ENCODE measurements at regions of chr14 and their contacts with region 1.

Region 1: GRCh38 chr14:54773171-54773975 is 129.3 kb downstream of the GCH1 start:
- DNase-seq: peak; percentile 78
- H3K4me3 ChIP-seq: peak overlapping the region; percentile 22
- H3K27ac ChIP-seq: peak overlapping the region; percentile 91
- H3K4me1 ChIP-seq: peaks cover 95% of the 10 kb centered on the region
- H3K27me3 ChIP-seq: no peaks in the 10 kb centered on the region
- CTCF ChIP-seq: peak; percentile 73

Region 2: GRCh38 chr14:54565785-54566409 is 207.5 kb before region 1 on chr14:
- intact Hi-C with region 1: loop called (anchors 2 kb)
- DNase-seq: peak; percentile 96
- H3K4me3 ChIP-seq: peak overlapping the region; percentile 89
- H3K27ac ChIP-seq: peak overlapping the region; percentile 99
- H3K4me1 ChIP-seq: peaks cover 63% of the 10 kb centered on the region
- H3K27me3 ChIP-seq: no peaks in the 10 kb centered on the region
- CTCF ChIP-seq: no peak

Region 3: DNA sequence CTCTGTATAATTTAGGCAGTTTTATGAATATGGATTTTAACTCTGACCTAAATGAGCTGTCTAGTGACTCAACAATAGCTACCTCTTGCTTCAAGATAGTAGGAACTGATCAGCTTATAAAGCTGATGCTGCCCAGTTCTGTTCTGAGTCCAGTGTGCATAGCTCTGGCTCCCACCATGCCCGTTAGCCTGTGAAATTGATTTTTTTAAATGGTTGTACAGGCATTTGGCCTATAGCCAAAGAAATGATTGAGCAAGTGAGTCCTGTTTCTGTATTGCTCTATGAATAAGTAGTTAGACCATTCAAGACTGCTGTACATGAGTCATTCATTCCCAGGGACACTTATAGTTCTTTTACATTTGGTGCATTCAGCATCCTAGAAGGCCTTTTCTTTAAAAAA is 170.0 kb before region 1 on chr14:
- intact Hi-C with region 1: no loop called
- DNase-seq: no peak
- H3K4me3 ChIP-seq: no peak overlapping the region
- H3K27ac ChIP-seq: no peak overlapping the region
- H3K4me1 ChIP-seq: peaks cover 79% of the 10 kb centered on the region
- H3K27me3 ChIP-seq: no peaks in the 10 kb centered on the region
- CTCF ChIP-seq: no peak